GM10248 (cell line): ENCODE measurements at regions of chr6 and their contacts with region 1.

Region 1: DNA sequence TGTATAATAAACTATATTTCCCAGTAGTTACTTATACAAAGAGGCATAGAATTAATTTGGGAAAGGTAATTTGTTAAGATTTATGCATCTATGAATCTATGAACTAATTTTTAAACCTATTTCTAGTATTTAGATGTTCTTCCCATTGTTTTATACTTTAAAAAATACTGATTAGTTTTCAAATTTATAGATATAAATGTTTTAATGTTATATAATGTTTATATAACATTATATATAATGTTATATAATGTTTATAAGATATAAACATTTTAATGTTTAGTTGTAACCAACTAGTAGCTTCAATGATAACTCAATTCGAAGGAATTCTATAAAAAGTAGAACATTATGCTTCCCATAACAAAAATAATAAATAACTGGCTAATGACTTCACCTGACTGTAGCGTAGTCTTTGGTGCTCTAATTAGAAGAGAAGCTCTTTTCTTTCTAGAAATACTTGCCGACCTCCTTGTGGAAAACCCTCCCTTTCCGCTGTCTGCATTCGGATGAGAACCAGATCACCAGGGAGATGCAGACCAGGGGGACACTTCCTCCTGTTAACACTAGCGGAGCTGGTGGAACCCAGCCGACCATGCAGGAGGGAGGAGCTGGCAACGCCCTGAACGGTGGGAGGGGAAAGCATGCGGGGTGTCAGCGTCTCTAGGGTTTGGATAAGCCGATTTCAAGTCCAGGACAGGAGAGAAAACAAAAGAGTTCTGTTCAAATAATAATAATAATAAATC is 158.4 kb downstream of the OR2B2 start:
- DNase-seq: peak; percentile 71
- CTCF ChIP-seq: peak; percentile 2

Region 2: GRCh38 chr6:27388293-27389197 is 365.3 kb before region 1 on chr6 and contains the start of gene ZNF391:
- CTCF ChIA-PET with region 1: no interaction called
- POLR2A ChIA-PET with region 1: no interaction called
- DNase-seq: peak; percentile 84
- CTCF ChIP-seq: no peak

Region 3: GRCh38 chr6:27518881-27519795 is 234.7 kb before region 1 on chr6:
- CTCF ChIA-PET with region 1: interaction called, 33 read pairs
- POLR2A ChIA-PET with region 1: no interaction called
- DNase-seq: peak; percentile 70
- CTCF ChIP-seq: peak; percentile 67

Region 4: DNA sequence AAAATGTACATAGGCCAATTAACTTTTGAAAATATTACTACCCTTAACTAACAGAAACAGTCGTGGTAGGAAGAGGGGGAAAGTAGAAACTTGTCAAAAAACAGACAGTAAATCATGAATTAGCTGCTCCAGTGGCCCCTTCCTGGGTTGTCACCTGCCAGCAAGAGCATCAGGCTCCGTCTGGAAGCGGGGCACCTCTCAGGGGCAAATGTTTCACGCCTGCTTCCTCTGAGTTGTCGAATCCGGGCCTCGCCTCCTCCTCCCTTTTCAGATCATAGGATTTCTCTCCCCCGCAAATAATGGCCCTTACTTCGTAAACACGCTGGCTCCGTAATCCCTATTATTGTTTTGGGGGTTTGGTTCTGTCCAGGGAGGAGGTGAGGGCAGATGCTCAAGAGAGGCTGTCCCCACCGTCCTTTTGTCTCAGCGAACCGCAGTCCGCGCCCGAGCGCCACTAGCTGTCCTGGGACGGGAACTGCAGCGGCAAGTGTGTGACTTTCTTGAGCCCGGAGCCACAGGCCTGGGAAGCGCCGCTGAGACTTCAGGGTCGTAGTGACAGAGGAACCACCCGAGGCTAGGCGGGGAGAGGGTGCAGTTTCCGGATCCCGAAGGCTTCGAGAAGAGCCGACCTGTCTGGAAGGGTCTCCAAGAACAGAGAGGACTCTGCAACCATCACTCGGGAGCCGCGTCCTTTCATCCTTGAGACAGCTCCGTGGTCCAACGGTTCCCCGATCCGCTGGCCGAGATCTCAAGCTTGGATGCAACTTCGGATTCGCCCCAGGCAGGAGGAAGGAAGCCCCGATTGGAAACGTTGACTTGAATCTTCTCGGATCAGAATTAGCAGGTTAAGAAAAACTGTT is 66.5 kb before region 1 on chr6:
- CTCF ChIA-PET with region 1: interaction called, 14 read pairs
- POLR2A ChIA-PET with region 1: no interaction called
- DNase-seq: peak; percentile 83
- CTCF ChIP-seq: peak; percentile 94

Region 5: GRCh38 chr6:27720607-27721580 is 32.9 kb before region 1 on chr6:
- CTCF ChIA-PET with region 1: interaction called, 14 read pairs
- POLR2A ChIA-PET with region 1: no interaction called
- DNase-seq: peak; percentile 27
- CTCF ChIP-seq: peak; percentile 8

Region 6: GRCh38 chr6:27743818-27744217 is 10.0 kb before region 1 on chr6:
- CTCF ChIA-PET with region 1: interaction called, 42 read pairs
- POLR2A ChIA-PET with region 1: no interaction called
- DNase-seq: no peak
- CTCF ChIP-seq: no peak

Region 7: GRCh38 chr6:27772261-27773001 is 18.6 kb after region 1 on chr6:
- CTCF ChIA-PET with region 1: interaction called, 147 read pairs
- POLR2A ChIA-PET with region 1: interaction called, 3 read pairs
- DNase-seq: peak; percentile 81
- CTCF ChIP-seq: peak; percentile 82

Region 8: DNA sequence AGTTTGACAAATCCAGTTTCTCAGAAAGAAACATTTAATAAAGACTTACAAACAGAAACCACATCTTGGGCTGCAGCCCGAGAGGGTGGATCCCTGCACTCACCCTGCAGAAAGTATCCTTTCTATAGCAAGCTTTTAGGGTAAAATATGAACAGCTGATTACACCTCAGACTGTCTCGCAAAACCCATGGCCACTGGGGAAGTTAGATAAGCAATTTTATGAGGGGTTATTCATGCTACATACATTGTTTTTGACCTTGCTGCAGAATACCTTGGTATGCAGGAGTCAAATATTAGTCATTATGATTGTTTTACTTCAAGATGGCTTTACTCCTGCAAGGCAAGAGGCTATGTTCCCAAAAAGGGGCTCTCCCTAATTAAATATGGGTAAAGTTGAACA is 31.5 kb after region 1 on chr6:
- CTCF ChIA-PET with region 1: no interaction called
- POLR2A ChIA-PET with region 1: no interaction called
- DNase-seq: no peak
- CTCF ChIP-seq: no peak

Region 9: GRCh38 chr6:27962506-27962905 is 208.7 kb after region 1 on chr6:
- CTCF ChIA-PET with region 1: no interaction called
- POLR2A ChIA-PET with region 1: no interaction called
- DNase-seq: no peak
- CTCF ChIP-seq: no peak